ENCODE measurements at regions of chr9 and their contacts with region 1.

Region 1: GRCh38 chr9:120792898-120793765 is at the start of gene FBXW2:
- DNase-seq: peak; percentile 93
- ATAC-seq: peak; percentile 99 to 100 (median 100)
- H3K4me3 ChIP-seq: peak within 1 kb of the TSS; percentile 64 to 99 (median 90)
- H3K27ac ChIP-seq: peak within 1 kb of the TSS; percentile 38 to 97 (median 93)
- H3K4me1 ChIP-seq: peaks cover 0 to 44% (median 38%) of the 10 kb centered on the region in 9 donors
- H3K27me3 ChIP-seq: no peaks in the 10 kb centered on the region
- CTCF ChIP-seq: no peak
- total RNA-seq, gene FBXW2: 38.7 to 52.0 (median 46.1) TPM

Region 2: GRCh38 chr9:120842690-120843499 is 49.8 kb after region 1 on chr9 and contains the start of gene PSMD5:
- intact Hi-C with region 1: loop called in 4 of 10 experiments (anchors 2 to 5 kb)
- DNase-seq: peak; percentile 97 to 99
- ATAC-seq: peak; percentile 99 to 100 (median 99)
- H3K4me3 ChIP-seq: peak within 1 kb of the TSS; percentile 68 to 87 (median 80)
- H3K27ac ChIP-seq: peak within 1 kb of the TSS; percentile 87 to 98 (median 95)
- H3K4me1 ChIP-seq: peaks cover 3 to 64% (median 30%) of the 10 kb centered on the region in 9 donors
- H3K27me3 ChIP-seq: no peaks in the 10 kb centered on the region
- CTCF ChIP-seq: peak in 2 of 9 donors; percentile 18
- total RNA-seq, gene PSMD5: 7.7 to 22.8 (median 15.4) TPM

Region 3: DNA sequence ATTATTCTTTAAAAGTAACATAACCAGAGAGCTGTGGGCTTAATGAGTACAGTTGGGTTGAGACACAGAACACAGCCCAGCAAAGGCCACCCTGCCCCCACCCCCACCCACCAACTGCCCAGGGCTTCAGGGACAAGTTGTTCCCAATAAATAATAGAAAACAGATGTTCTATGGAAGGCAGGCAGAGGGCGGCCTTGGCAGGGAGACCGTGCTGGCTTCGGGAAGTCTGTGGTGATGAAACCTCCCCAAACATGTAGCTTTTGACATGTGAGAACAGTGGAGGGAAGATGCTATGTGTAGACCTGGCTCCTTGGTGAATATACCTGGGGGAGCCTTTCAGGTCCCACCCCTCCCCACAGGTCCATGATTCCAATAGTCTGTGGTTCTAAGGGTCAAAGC is 123.5 kb after region 1 on chr9:
- intact Hi-C with region 1: no loop called
- DNase-seq: peak in 1 of 2 donors; percentile 64
- ATAC-seq: peak in 5 of 8 donors; percentile 23 to 53 (median 23)
- H3K4me3 ChIP-seq: no peak overlapping the region
- H3K27ac ChIP-seq: peak overlapping the region in 3 of 10 donors; percentile 1 to 29 (median 27)
- H3K4me1 ChIP-seq: peaks cover 7 to 51% (median 29%) of the 10 kb centered on the region in 9 donors
- H3K27me3 ChIP-seq: no peaks in the 10 kb centered on the region
- CTCF ChIP-seq: peak in 3 of 9 donors; percentile 17 to 40 (median 32)

Measured in heart right ventricle (tissue), 16 donors.